Esophagus squamous epithelium (tissue), 5 donors: ENCODE measurements at regions of chrX and their contacts with region 1.

Region 1: GRCh38 chrX:149568701-149569296 is 18.5 kb downstream of the MAGEA9B start:
- DNase-seq: no peak
- H3K4me3 ChIP-seq: no peak overlapping the region
- H3K27ac ChIP-seq: no peak overlapping the region
- H3K4me1 ChIP-seq: no peaks in the 10 kb centered on the region
- H3K27me3 ChIP-seq: no peaks in the 10 kb centered on the region
- CTCF ChIP-seq: no peak
- POLR2A ChIP-seq: no peak

Region 2: GRCh38 chrX:149631234-149632165 is 62.7 kb after region 1 on chrX and contains the start of gene TMEM185A:
- intact Hi-C with region 1: loop called (anchors 10 kb)
- DNase-seq: no peak
- H3K4me3 ChIP-seq: peak within 1 kb of the TSS; percentile 61 to 76 (median 73)
- H3K27ac ChIP-seq: peak within 1 kb of the TSS; percentile 66 to 83 (median 79)
- H3K4me1 ChIP-seq: peaks cover 0 to 55% (median 6%) of the 10 kb centered on the region in 3 donors
- H3K27me3 ChIP-seq: no peaks in the 10 kb centered on the region
- CTCF ChIP-seq: no peak
- POLR2A ChIP-seq: peak in 1 of 4 donors; percentile 15
- total RNA-seq, gene TMEM185A: 7.9 to 19.3 (median 15.3) TPM